GM18951 (cell line): ENCODE measurements at regions of chr1 and their contacts with region 1.

Region 1: DNA sequence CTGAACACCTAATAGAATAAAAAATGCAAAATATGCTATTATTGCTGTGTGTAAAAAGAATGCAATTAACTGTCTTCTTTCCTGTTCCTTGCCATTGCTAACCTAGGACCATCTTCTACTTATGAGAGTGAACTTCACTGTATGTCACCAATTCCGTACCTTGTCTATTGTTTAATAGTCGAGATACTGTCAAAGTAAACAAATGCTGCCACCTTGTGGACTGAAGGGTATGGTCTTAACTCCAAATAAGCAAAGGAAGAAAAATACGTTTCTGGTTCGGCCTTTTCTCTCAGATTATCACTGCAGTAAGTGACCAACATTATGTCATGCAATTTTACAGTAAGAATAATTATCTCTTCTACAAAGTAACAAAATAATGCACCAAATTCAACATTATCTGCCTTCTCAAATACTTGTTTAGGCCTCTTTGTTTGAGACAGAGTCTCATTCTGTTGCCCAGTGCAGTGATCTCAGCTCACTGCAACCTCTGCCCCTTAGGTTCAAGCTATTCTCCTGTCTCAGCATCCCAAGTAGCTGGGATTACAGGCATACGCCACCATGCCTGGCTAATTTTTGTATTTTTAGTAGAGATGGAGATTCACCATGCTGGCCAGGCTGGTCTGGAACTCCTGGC is 133.4 kb downstream of the COP1 start:
- POLR2A ChIP-seq: no peak

Region 2: DNA sequence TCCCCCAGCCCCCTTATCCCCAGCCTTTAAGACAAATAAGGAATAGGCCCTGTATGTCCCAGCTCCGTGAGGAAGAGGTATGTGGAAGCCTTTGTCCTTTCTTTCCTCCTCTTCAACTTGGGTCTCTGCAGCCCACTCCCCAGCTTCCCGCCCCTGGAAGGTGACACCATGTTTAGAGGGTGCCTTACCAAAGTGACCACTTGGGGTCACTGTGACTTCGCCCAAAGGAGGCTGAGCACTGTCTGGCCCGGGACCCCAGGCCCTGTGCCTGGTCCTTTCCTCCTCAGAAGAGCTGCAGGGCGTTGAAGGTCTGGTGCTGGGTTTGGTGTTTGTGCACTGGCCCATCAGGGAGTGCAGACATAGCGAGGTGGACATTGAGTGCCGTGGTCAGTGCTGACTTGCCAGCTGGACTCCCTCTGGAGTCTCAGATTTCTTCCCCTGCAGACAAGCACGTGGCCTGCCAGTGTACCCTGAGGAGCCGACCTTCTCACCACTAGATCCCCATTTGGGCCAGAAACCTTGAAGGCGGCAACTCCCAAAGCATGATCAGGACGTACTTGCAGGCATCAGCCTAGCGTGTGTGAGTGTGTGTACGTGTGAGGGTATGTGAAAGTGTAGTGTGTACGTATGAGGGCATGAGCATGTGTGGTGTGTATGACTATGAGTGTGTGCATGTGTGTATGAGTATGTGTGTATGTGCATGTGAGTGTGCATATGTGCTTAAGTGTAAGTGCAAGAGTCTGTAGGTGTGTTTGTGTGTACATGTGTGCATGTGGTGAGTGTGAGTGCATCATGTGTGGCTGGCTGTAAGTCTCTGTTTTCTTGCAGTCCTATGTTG is 699.6 kb before region 1 on chr1:
- in situ Hi-C with region 1: loop called (anchors 25 kb)
- POLR2A ChIP-seq: no peak